ENCODE measurements at regions of chr10 and their contacts with region 1.

Region 1: GRCh38 chr10:15789793-15790525 is 70.2 kb upstream of the ITGA8 start:
- DNase-seq: peak in 1 of 5 donors; percentile 45
- H3K4me3 ChIP-seq: no peak overlapping the region
- H3K27ac ChIP-seq: peak overlapping the region in 1 of 2 donors; percentile 68
- H3K4me1 ChIP-seq: peaks cover 5% of the 10 kb centered on the region
- H3K27me3 ChIP-seq: no peaks in the 10 kb centered on the region
- CTCF ChIP-seq: no peak
- EP300 ChIP-seq: no peak
- POLR2A ChIP-seq: no peak

Region 2: DNA sequence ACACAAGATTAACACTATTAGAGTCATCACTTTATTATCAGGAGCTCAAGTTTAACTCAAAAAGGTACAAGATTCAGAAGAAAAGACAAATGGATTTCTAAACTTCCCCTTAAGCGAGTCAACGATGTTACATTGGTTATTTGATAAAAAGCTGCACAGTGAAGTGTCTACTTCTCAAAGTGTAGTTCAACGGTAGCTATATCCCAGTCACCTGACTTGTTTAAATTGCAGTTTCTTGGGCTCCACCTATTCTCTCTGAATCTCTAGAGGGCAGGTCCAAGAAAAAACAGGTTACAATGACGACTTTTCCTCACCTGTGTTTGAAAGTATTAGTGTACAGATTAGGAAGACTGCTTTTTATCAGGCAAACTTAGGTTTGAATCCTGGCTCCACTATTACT is 53.7 kb after region 1 on chr10:
- intact Hi-C with region 1: loop called in 1 of 4 experiments (anchors 2 kb)
- DNase-seq: no peak
- H3K4me3 ChIP-seq: no peak overlapping the region
- H3K27ac ChIP-seq: no peak overlapping the region
- H3K4me1 ChIP-seq: no peaks in the 10 kb centered on the region
- H3K27me3 ChIP-seq: no peaks in the 10 kb centered on the region
- CTCF ChIP-seq: no peak
- EP300 ChIP-seq: no peak
- POLR2A ChIP-seq: no peak